Heart right ventricle (tissue), 16 donors: ENCODE measurements at regions of chr10 and their contacts with region 1.

Region 1: GRCh38 chr10:92432596-92432995 is 141.3 kb downstream of the IDE start:
- DNase-seq: no peak
- ATAC-seq: peak in 2 of 8 donors; percentile 35 to 49
- H3K4me3 ChIP-seq: no peak overlapping the region
- H3K27ac ChIP-seq: peak overlapping the region in 7 of 10 donors; percentile 45 to 74 (median 62)
- H3K4me1 ChIP-seq: peaks cover 5 to 38% (median 26%) of the 10 kb centered on the region in 9 donors
- H3K27me3 ChIP-seq: no peaks in the 10 kb centered on the region
- CTCF ChIP-seq: no peak

Region 2: GRCh38 chr10:91758303-91759146 is 674.1 kb before region 1 on chr10:
- intact Hi-C with region 1: loop called in 1 of 10 experiments (anchors 5 kb)
- DNase-seq: no peak
- ATAC-seq: peak in 1 of 8 donors; percentile 53
- H3K4me3 ChIP-seq: no peak overlapping the region
- H3K27ac ChIP-seq: no peak overlapping the region
- H3K4me1 ChIP-seq: no peaks in the 10 kb centered on the region
- H3K27me3 ChIP-seq: peaks cover 0 to 8% (median 0%) of the 10 kb centered on the region in 7 donors
- CTCF ChIP-seq: peak in 8 of 9 donors; percentile 34 to 72 (median 60)

Region 3: DNA sequence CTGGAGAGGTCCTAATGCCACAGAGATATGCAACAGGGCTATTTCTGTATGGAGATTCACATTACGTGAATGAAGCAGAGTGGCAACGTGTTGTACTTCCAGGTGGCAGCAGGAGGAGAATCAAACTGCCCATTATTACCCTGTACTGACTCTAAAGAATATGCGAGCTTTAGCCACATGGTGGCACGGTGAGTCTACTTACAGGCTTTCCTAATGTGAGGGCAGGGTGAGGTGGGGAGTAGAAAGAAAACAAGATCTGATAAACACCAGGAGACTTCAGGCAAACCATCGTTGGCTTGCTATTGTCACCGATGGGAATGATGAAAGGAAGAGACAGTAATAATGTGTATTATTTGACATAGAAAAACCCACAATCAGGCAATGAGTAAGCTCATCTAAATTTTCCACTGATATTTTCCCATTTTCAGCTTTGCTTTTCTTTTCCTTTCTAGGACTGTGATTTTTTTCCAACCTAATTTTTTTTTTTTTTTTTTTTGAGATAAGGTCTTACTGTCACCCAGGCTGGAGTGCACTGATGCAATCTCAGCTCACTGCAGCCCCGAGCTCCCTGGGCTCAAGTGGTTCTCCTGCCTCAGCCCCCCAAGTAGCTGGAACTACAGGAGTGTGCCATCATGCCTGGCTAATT is 344.7 kb before region 1 on chr10:
- intact Hi-C with region 1: loop called (anchors 1 to 5 kb)
- DNase-seq: peak in 1 of 2 donors; percentile 78
- ATAC-seq: peak; percentile 92 to 96 (median 94)
- H3K4me3 ChIP-seq: no peak overlapping the region
- H3K27ac ChIP-seq: peak overlapping the region in 6 of 10 donors; percentile 2 to 55 (median 38)
- H3K4me1 ChIP-seq: peaks cover 0 to 40% (median 22%) of the 10 kb centered on the region in 9 donors
- H3K27me3 ChIP-seq: no peaks in the 10 kb centered on the region
- CTCF ChIP-seq: peak; percentile 62 to 86 (median 72)

Region 4: GRCh38 chr10:92290837-92291615 is 141.6 kb before region 1 on chr10 and contains the starts of genes CPEB3 and MARCHF5:
- intact Hi-C with region 1: loop called in 5 of 10 experiments (anchors 5 to 10 kb)
- DNase-seq: peak; percentile 96
- ATAC-seq: peak; percentile 99
- H3K4me3 ChIP-seq: peak within 1 kb of the TSS; percentile 79 to 99 (median 98)
- H3K27ac ChIP-seq: peak within 1 kb of the TSS; percentile 87 to 99 (median 96)
- H3K4me1 ChIP-seq: peaks cover 0 to 35% (median 17%) of the 10 kb centered on the region in 9 donors
- H3K27me3 ChIP-seq: no peaks in the 10 kb centered on the region
- CTCF ChIP-seq: peak; percentile 49 to 76 (median 64)
- total RNA-seq, gene CPEB3: 7.2 to 17.6 (median 13.7) TPM
- total RNA-seq, gene MARCHF5: 25.6 to 40.1 (median 33.9) TPM

Region 5: GRCh38 chr10:92366412-92367021 is 66.1 kb before region 1 on chr10:
- intact Hi-C with region 1: loop called in 1 of 10 experiments (anchors 5 kb)
- DNase-seq: no peak
- ATAC-seq: no peak
- H3K4me3 ChIP-seq: no peak overlapping the region
- H3K27ac ChIP-seq: no peak overlapping the region
- H3K4me1 ChIP-seq: no peaks in the 10 kb centered on the region
- H3K27me3 ChIP-seq: no peaks in the 10 kb centered on the region
- CTCF ChIP-seq: peak in 2 of 9 donors; percentile 26 to 31

Region 6: DNA sequence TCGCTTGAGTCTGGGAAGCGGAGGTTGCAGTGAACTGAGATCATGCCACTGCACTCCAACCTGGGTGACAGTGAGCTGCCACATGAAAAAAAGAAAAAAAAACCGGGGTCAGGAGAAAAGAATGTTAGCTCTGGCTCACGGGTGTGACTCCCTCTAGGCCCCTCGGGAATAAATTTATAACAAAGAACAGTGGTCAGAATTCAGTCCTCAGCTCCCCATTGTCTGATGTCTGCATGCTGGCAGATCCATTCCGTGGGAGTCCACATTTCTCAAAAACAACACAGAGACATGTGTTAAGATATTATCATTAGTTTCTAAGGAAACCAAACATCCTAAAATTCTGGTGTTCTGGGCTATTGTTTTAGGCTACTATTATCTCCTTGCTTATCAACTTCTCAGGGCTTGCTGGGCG is 51.0 kb before region 1 on chr10:
- intact Hi-C with region 1: loop called in 2 of 10 experiments (anchors 2 to 5 kb)
- DNase-seq: peak in 1 of 2 donors; percentile 55
- ATAC-seq: peak; percentile 75 to 97 (median 86)
- H3K4me3 ChIP-seq: no peak overlapping the region
- H3K27ac ChIP-seq: peak overlapping the region in 6 of 10 donors; percentile 45 to 74 (median 64)
- H3K4me1 ChIP-seq: peaks cover 0 to 23% (median 5%) of the 10 kb centered on the region in 9 donors
- H3K27me3 ChIP-seq: no peaks in the 10 kb centered on the region
- CTCF ChIP-seq: no peak